PC-9 (cell line): ENCODE measurements at regions of chr5 and their contacts with region 1.

Region 1: DNA sequence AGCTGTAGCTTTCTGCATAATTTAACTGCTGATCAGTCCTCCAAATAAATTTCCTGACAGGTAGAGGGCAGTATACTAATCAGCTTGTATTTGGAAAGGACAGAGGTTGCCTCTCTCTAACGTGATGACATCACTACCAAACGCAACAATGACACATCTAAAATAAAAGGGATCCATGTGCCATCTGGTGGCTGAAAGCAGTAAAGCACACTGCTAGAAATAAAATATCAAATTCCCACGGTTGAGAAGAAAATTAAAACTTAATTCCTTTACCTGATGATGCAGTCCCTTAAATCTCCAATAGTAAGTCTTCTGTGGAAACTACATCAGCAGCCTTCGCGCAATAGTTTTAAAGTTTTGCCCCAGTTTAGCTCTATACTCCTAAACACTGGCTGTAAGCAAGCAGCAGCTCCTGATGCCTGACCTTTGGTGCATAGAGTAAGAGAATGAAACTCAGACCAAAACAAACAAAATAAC is 54.5 kb downstream of the DIAPH1 start:
- DNase-seq: peak; percentile 41 to 89
- H3K4me3 ChIP-seq: no peak overlapping the region
- H3K27ac ChIP-seq: peak overlapping the region; percentile 85
- H3K4me1 ChIP-seq: peaks cover 5% of the 10 kb centered on the region; the same call in 1 of the 2 replicates
- H3K27me3 ChIP-seq: no peaks in the 10 kb centered on the region
- CTCF ChIP-seq: peak; percentile 97

Region 2: GRCh38 chr5:141084487-141084990 is 479.7 kb before region 1 on chr5:
- CTCF ChIA-PET with region 1: interaction called, 4 read pairs
- POLR2A ChIA-PET with region 1: no interaction called
- intact Hi-C with region 1: loop called (anchors 5 kb)
- DNase-seq: peak; percentile 39 to 62
- H3K4me3 ChIP-seq: peak overlapping the region; percentile 59
- H3K27ac ChIP-seq: no peak overlapping the region
- H3K4me1 ChIP-seq: no peaks in the 10 kb centered on the region
- H3K27me3 ChIP-seq: no peaks in the 10 kb centered on the region
- CTCF ChIP-seq: peak; percentile 63

Region 3: DNA sequence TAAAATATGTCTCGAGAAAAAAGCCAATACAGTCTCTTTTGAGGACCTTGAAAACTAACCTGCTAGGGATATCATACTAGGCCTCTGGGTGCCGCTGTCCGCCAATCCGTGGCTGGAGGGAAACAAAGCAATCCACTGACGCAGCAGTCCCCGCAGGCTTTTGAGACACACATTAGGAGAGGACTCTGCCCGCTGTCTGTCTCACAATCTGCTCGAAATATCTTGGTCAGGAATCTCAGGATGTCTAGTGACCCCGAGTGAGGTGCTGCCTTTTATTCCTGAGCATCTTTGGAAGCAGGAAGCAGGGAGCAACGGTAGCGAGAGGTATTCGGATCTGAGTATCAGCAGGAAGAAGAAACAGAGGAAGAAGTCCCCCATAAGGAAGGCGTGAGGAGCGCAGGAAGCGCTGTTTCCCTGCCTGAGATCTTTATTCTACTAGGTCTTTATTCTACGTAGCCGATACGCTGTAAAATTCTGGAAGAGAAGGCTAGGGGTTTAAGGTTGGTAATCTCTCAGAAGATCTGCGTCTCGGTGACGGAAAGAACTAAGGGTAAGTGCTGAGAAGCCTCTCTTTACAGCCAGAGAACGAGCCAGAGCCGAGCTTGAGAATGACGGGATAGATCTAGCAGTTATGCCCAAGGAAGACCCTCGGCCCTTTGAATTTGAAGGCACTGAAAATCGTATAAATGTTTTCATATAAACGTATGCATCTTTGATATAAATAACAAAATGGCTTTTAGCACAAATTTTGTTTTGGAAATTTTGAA is 238.0 kb before region 1 on chr5:
- CTCF ChIA-PET with region 1: interaction called, 6 read pairs
- POLR2A ChIA-PET with region 1: no interaction called
- intact Hi-C with region 1: loop called (anchors 5 kb)
- DNase-seq: peak; percentile 45 to 56
- H3K4me3 ChIP-seq: peak overlapping the region; percentile 23; the same call in 1 of the 2 replicates
- H3K27ac ChIP-seq: no peak overlapping the region
- H3K4me1 ChIP-seq: 0 out of 2 replicates have a peak, but pooled peaks cover 2% of the 10 kb centered on the region
- H3K27me3 ChIP-seq: no peaks in the 10 kb centered on the region; the same call in 1 of the 2 replicates
- CTCF ChIP-seq: peak; percentile 55; the same call in 1 of the 2 replicates

Region 4: DNA sequence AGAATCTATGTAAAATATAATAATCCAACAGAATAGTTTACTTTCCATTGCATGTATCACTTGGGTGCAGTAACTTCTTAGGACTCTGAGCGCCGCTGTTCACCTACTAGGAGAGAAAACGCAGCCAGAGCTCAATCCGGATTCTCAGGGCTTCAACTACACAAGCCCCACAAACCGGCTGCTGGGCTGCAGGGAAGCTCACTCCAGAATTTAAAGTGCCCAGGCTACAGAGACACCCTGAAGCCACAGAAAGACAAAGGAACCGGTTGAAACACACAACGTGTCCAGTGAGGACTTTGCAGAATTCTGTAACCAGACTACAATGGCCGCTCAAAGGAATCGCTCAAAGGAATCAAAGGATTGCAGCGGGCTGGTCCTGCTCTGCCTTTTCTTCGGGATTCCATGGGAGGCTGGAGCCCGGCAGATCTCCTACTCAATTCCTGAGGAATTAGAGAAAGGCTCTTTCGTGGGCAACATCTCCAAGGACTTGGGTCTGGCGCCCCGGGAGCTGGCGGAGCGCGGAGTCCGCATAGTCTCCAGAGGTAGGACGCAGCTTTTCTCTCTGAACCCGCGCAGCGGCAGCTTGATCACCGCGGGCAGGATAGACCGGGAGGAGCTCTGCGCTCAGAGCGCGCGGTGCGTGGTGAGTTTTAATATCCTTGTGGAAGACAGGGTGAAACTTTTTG is 151.3 kb before region 1 on chr5 and contains the start of gene PCDHGA10:
- CTCF ChIA-PET with region 1: interaction called, 9 read pairs
- POLR2A ChIA-PET with region 1: no interaction called
- intact Hi-C with region 1: loop called (anchors 1 kb)
- DNase-seq: peak; percentile 58
- H3K4me3 ChIP-seq: peak within 1 kb of the TSS; percentile 54; the same call in 1 of the 2 replicates
- H3K27ac ChIP-seq: no peak within 1 kb of the TSS
- H3K4me1 ChIP-seq: no peaks in the 10 kb centered on the region
- H3K27me3 ChIP-seq: 0 out of 2 replicates have a peak, but pooled peaks cover 11% of the 10 kb centered on the region
- CTCF ChIP-seq: peak; percentile 86
- total RNA-seq, gene PCDHGA10: 0.13 and 0.15 TPM in 2 replicates

Region 5: GRCh38 chr5:141532726-141533125 is 31.5 kb before region 1 on chr5:
- CTCF ChIA-PET with region 1: no interaction called
- POLR2A ChIA-PET with region 1: no interaction called
- intact Hi-C with region 1: no loop called
- DNase-seq: no peak
- H3K4me3 ChIP-seq: no peak overlapping the region
- H3K27ac ChIP-seq: no peak overlapping the region
- H3K4me1 ChIP-seq: no peaks in the 10 kb centered on the region
- H3K27me3 ChIP-seq: no peaks in the 10 kb centered on the region
- CTCF ChIP-seq: no peak

Region 6: GRCh38 chr5:141951332-141951781 is 387.1 kb after region 1 on chr5:
- CTCF ChIA-PET with region 1: no interaction called
- POLR2A ChIA-PET with region 1: no interaction called
- intact Hi-C with region 1: no loop called
- DNase-seq: no peak
- H3K4me3 ChIP-seq: no peak overlapping the region
- H3K27ac ChIP-seq: no peak overlapping the region
- H3K4me1 ChIP-seq: no peaks in the 10 kb centered on the region
- H3K27me3 ChIP-seq: no peaks in the 10 kb centered on the region
- CTCF ChIP-seq: peak; percentile 46

Region 7: GRCh38 chr5:142012792-142013388 is 448.6 kb after region 1 on chr5 and contains the start of gene GNPDA1:
- CTCF ChIA-PET with region 1: interaction called, 13 read pairs
- POLR2A ChIA-PET with region 1: no interaction called
- intact Hi-C with region 1: no loop called
- DNase-seq: peak; percentile 66 to 81
- H3K4me3 ChIP-seq: peak within 1 kb of the TSS; percentile 61
- H3K27ac ChIP-seq: peak within 1 kb of the TSS; percentile 82
- H3K4me1 ChIP-seq: peaks cover 34% of the 10 kb centered on the region
- H3K27me3 ChIP-seq: no peaks in the 10 kb centered on the region
- CTCF ChIP-seq: no peak
- total RNA-seq, gene GNPDA1: 46.5 and 54.1 TPM in 2 replicates